ENCODE measurements at regions of chrX and their contacts with region 1.

Region 1: DNA sequence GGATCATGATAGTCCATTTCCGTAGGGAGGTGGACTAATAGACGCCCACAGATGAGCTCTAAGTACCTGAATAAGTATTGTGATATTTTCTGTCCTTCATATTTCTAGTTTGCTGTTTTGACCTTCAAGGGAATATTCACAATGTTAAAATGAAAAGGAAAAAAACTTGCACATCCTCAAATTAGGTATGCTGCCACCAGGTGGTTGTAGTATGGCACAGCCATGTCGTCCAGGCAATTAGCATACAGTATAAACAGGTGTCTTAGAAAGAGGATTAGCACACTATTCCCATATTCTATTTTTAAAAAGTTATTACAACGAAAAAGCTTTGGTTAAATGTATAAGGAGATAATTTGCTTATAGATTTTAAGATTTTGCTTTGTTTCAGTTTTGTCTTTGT is 802.0 kb downstream of the RPA4 start:
- H3K4me3 Mint-ChIP-seq: no peak overlapping the region
- H3K27ac Mint-ChIP-seq: no peak overlapping the region
- H3K4me1 Mint-ChIP-seq: no peaks in the 10 kb centered on the region
- H3K27me3 Mint-ChIP-seq: no peaks in the 10 kb centered on the region

Region 2: DNA sequence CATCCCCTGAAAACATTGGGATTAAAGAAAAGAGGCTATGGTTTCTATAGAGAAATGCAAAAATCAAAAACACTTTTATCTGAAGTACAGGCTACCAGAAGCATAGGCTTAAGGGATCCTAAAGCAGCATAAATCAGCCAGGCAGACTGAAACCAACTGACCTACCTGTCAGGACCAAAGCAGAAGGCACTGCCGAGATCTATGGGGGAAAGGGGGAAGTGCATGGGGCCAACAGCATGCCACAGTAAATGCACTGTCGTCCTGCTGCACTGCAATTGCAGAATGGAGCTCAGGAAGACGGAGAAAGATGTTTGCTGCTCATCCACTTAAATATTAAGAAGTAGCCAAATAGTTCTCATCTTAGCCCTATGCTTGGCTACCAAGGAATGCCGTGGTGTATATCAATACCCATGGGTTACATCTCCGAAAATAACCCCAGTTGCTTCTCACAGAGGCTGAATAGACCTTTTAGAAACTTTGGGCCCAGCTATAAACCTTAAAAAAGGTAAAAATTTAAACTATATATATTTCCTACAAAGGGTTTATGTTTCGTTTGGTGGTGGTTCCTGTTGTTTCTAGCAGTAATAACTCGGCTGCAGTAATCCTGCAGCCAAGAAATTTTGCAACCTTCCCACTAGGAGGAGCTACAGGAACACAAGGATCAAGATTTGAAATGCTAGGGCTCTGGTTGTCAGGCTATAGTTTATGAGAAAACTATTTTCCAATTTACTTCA is 1313.3 kb before region 1 on chrX:
- intact Hi-C with region 1: loop called (anchors 10 kb)
- H3K4me3 Mint-ChIP-seq: no peak overlapping the region
- H3K27ac Mint-ChIP-seq: no peak overlapping the region
- H3K4me1 Mint-ChIP-seq: no peaks in the 10 kb centered on the region
- H3K27me3 Mint-ChIP-seq: no peaks in the 10 kb centered on the region

Region 3: GRCh38 chrX:97284531-97284930 is 401.2 kb before region 1 on chrX:
- intact Hi-C with region 1: no loop called
- H3K4me3 Mint-ChIP-seq: no peak overlapping the region
- H3K27ac Mint-ChIP-seq: no peak overlapping the region
- H3K4me1 Mint-ChIP-seq: no peaks in the 10 kb centered on the region
- H3K27me3 Mint-ChIP-seq: no peaks in the 10 kb centered on the region

Region 4: GRCh38 chrX:97563531-97564133 is 122.1 kb before region 1 on chrX:
- intact Hi-C with region 1: no loop called
- H3K4me3 Mint-ChIP-seq: peak overlapping the region; percentile 54
- H3K27ac Mint-ChIP-seq: peak overlapping the region; percentile 76
- H3K4me1 Mint-ChIP-seq: no peaks in the 10 kb centered on the region
- H3K27me3 Mint-ChIP-seq: no peaks in the 10 kb centered on the region

Region 5: GRCh38 chrX:97984641-97985040 is 298.9 kb after region 1 on chrX:
- intact Hi-C with region 1: no loop called
- H3K4me3 Mint-ChIP-seq: no peak overlapping the region
- H3K27ac Mint-ChIP-seq: no peak overlapping the region
- H3K4me1 Mint-ChIP-seq: no peaks in the 10 kb centered on the region
- H3K27me3 Mint-ChIP-seq: no peaks in the 10 kb centered on the region

Measured in dendritic cell treated with granulocyte-macrophage colony-stimulating factor and Interleukin-4, amounts not matched to agents 40 ng/mL and 50 ng/mL, for 4 days (primary cell).